ENCODE measurements at regions of chr3 and their contacts with region 1.

Region 1: GRCh38 chr3:120558771-120559241 is 37.3 kb upstream of the NDUFB4 start:
- DNase-seq: peak; percentile 87
- H3K4me3 ChIP-seq: peak overlapping the region; percentile 39
- H3K27ac ChIP-seq: peak overlapping the region; percentile 53
- H3K4me1 ChIP-seq: peaks cover 3% of the 10 kb centered on the region
- H3K27me3 ChIP-seq: no peaks in the 10 kb centered on the region
- CTCF ChIP-seq: peak; percentile 99

Region 2: GRCh38 chr3:120239644-120240043 is 319.2 kb before region 1 on chr3:
- intact Hi-C with region 1: loop called (anchors 5 kb)
- DNase-seq: no peak
- H3K4me3 ChIP-seq: no peak overlapping the region
- H3K27ac ChIP-seq: no peak overlapping the region
- H3K4me1 ChIP-seq: no peaks in the 10 kb centered on the region
- H3K27me3 ChIP-seq: no peaks in the 10 kb centered on the region
- CTCF ChIP-seq: no peak

Region 3: DNA sequence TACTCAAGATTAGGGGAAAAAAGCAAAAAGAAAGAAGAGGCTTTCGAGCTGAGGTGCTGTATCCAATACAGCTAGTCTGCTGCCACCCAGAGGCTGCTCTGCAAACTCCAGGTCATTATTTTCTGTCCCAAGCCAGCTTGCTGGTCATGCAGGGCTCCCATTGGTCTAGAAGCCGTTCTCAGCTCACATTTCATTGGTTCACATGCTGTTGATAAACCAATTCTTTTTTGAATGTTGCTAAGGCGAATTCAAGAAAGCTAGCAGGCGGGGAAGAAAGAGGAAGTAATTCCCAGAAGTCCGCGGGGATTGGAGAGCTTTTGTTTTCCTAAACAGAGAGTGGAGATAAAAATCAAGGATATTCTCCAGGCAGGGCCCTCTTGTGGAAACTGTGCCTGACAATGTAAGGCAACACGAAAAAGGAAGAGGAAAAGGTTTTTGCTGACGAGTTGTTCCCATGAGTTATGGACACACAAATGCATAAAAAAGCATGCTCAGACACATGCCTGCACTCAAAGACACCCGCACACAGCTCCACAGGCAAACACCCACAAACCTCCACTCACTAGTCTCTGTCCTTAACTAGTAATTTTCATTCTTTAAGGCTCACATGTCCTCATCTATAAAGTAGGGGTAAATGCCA is 141.4 kb before region 1 on chr3:
- intact Hi-C with region 1: loop called (anchors 2 kb)
- DNase-seq: peak; percentile 97
- H3K4me3 ChIP-seq: peak overlapping the region; percentile 6
- H3K27ac ChIP-seq: peak overlapping the region; percentile 68
- H3K4me1 ChIP-seq: peaks cover 3% of the 10 kb centered on the region
- H3K27me3 ChIP-seq: no peaks in the 10 kb centered on the region
- CTCF ChIP-seq: peak; percentile 87

Region 4: DNA sequence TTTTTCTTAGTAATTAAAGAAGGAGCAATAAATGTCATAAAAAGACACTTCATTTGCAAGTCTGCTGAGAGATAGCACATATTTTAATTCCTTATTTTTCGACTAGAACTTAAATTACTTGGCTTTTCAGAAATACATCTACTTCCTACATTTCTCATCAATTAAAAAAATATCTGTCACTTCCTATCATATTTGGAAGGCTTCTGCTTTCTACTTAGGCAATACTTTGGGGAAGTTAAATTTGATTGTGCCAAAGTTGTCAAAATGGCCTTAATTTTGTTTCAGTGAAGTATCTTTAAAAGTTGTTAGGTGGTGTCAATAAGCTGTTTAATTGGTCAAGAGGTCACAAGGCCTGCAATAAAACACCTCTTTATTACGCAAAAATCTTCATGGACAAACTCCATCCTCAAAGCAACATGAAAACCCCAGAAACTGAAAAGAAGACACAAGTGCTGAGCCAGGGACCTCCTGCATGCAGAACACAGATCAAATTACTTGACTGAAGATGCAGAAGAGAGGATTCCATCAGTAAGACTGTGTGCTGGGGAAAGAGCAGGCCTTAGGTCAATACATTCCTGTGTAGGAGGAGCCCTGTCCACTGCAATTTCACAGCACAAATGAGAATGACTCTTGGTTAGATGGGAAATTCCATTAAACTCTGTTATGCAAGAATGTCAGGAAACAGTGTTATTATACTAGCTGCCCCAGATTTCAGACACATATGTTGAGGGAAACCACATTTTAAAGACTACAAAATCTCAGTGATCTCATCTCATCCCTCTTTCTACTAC is 60.1 kb before region 1 on chr3:
- intact Hi-C with region 1: no loop called
- DNase-seq: no peak
- H3K4me3 ChIP-seq: no peak overlapping the region
- H3K27ac ChIP-seq: no peak overlapping the region
- H3K4me1 ChIP-seq: no peaks in the 10 kb centered on the region
- H3K27me3 ChIP-seq: no peaks in the 10 kb centered on the region
- CTCF ChIP-seq: no peak

Region 5: GRCh38 chr3:120795017-120795648 is 236.3 kb after region 1 on chr3:
- intact Hi-C with region 1: loop called (anchors 5 kb)
- DNase-seq: peak; percentile 80
- H3K4me3 ChIP-seq: no peak overlapping the region
- H3K27ac ChIP-seq: no peak overlapping the region
- H3K4me1 ChIP-seq: peaks cover 3% of the 10 kb centered on the region
- H3K27me3 ChIP-seq: no peaks in the 10 kb centered on the region
- CTCF ChIP-seq: peak; percentile 57